AG04450 (cell line): ENCODE measurements at regions of chr1 and their contacts with region 1.

Region 1: DNA sequence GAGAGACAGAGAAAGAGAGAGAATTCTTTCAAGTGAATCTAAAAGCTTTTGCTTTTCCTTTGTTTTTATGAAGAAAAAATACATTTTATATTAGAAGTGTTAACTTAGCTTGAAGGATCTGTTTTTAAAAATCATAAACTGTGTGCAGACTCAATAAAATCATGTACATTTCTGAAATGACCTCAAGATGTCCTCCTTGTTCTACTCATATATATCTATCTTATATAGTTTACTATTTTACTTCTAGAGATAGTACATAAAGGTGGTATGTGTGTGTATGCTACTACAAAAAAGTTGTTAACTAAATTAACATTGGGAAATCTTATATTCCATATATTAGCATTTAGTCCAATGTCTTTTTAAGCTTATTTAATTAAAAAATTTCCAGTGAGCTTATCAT is 117.6 kb downstream of the PTPRC start:
- DNase-seq: no peak
- H3K4me3 ChIP-seq: no peak overlapping the region
- H3K27ac ChIP-seq: no peak overlapping the region
- H3K27me3 ChIP-seq: no peaks in the 10 kb centered on the region
- CTCF ChIP-seq: peak; percentile 33; the same call in 1 of the 2 replicates

Region 2: DNA sequence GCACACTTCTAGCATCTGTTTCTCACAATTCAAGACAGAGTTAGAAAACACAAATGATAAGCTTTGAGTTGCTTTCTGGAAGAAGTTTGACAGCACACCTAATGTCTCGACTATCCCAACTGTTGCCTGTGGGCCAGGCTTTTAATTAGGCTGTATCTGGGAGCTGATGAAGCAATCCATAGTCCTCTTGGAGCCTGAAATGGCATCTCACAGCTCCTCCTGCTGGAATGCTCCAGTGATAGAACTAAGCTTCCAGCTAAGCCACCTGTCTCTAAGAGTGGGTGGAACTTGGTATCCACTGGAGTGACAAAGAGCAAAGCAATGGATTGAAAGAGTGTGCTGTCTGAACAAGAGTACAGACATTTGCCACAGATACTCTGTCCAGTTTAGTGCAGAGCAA is 665.7 kb after region 1 on chr1:
- CTCF ChIA-PET with region 1: interaction called, 22 read pairs
- POLR2A ChIA-PET with region 1: no interaction called
- DNase-seq: peak; percentile 8
- H3K4me3 ChIP-seq: no peak overlapping the region
- H3K27ac ChIP-seq: no peak overlapping the region
- H3K27me3 ChIP-seq: no peaks in the 10 kb centered on the region
- CTCF ChIP-seq: peak; percentile 62

Region 3: GRCh38 chr1:199463521-199464128 is 707.2 kb after region 1 on chr1:
- CTCF ChIA-PET with region 1: interaction called, 18 read pairs
- POLR2A ChIA-PET with region 1: no interaction called
- DNase-seq: peak; percentile 54
- H3K4me3 ChIP-seq: no peak overlapping the region
- H3K27ac ChIP-seq: no peak overlapping the region
- H3K27me3 ChIP-seq: no peaks in the 10 kb centered on the region
- CTCF ChIP-seq: peak; percentile 72

Region 4: DNA sequence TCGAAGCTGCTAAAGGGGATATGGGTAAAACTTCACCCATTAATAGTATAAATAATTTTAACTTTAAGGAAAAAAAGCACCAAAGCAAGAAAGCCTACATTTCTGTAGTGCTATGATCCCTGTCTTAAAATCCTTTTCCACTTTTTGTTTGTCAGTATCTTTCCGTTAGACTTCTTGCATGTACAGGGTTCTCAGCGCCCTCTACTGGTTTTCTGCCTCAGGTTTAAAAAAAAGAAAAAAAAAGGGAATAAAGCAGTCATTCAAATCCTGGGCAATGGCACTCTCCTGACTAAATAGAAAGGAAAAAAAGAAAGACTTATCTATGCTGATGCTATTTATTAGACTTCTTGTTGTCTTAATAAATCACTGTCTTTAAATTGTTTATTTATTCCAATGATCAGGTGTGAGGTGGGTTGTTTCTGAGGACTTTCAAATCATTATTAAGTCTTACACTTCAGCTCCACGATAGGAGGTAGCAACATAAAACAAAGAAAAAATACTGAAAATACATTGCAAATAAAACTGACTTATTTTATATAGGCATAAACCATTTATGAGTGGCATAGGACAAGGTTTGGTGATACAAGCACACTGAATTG is 795.6 kb after region 1 on chr1:
- CTCF ChIA-PET with region 1: interaction called, 22 read pairs
- POLR2A ChIA-PET with region 1: no interaction called
- DNase-seq: peak; percentile 48
- H3K4me3 ChIP-seq: no peak overlapping the region
- H3K27ac ChIP-seq: no peak overlapping the region
- H3K27me3 ChIP-seq: no peaks in the 10 kb centered on the region
- CTCF ChIP-seq: peak; percentile 91